HEK293 (cell line): ENCODE measurements at regions of chr2 and their contacts with region 1.

Region 1: GRCh38 chr2:74553892-74554645 is at the start of gene LOXL3:
- H3K4me3 ChIP-seq: peak within 1 kb of the TSS; percentile 56
- H3K27ac ChIP-seq: peak within 1 kb of the TSS; percentile 49; the same call in 1 of the 2 replicates
- H3K4me1 ChIP-seq: no peaks in the 10 kb centered on the region; the same call in 1 of the 2 replicates
- CTCF ChIP-seq: no peak

Region 2: DNA sequence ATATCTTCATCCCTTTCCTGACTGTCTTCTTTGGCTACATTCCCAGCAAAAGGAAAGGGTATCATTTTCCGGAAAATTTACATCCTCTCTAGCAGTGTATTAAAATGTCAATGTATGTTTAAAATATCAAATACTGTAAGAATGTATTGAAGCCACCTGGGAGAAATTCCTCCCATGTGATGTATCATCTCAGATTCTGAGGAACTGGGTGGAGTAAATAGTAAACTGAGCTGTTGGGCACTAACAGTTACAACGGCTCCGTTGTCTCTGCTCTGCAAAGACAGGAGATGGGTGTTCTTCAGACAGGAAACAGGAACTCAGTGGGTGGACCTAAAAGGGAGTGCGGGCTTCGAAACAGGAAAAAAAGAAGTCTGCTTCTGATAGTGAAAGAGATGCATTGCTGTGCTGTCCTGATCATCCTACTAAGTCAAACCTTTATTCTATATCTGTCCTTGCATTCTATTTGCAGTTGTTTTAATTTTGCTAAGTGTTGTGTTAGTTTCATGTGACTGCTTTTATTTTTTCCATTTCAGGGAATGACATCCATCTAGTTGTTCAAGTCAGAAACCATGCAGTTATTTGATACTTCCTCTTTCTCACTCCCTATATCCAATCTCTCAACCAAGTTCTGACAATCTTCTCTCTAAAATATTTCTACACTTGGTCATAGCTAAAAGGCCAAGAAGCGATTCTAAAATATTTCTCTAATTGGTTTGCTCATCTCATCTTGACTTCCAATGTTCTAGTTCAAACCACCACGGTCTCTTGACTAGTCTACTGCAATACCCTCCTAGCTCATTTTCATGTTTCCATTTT is 19.9 kb after region 1 on chr2:
- CTCF ChIA-PET with region 1: no interaction called
- POLR2A ChIA-PET with region 1: interaction called, 11 read pairs
- H3K4me3 ChIP-seq: no peak overlapping the region
- H3K27ac ChIP-seq: no peak overlapping the region
- H3K4me1 ChIP-seq: no peaks in the 10 kb centered on the region
- CTCF ChIP-seq: no peak

Region 3: GRCh38 chr2:74675090-74675489 is 121.0 kb after region 1 on chr2:
- CTCF ChIA-PET with region 1: no interaction called
- POLR2A ChIA-PET with region 1: no interaction called
- H3K4me3 ChIP-seq: no peak overlapping the region
- H3K27ac ChIP-seq: no peak overlapping the region
- H3K4me1 ChIP-seq: no peaks in the 10 kb centered on the region
- CTCF ChIP-seq: no peak